BJ (cell line): ENCODE measurements at regions of chr6 and their contacts with region 1.

Region 1: GRCh38 chr6:128538763-128539162 is 18.4 kb upstream of the PTPRK start:
- DNase-seq: peak; percentile 37
- H3K4me3 ChIP-seq: no peak overlapping the region
- H3K27me3 ChIP-seq: no peaks in the 10 kb centered on the region
- CTCF ChIP-seq: no peak

Region 2: DNA sequence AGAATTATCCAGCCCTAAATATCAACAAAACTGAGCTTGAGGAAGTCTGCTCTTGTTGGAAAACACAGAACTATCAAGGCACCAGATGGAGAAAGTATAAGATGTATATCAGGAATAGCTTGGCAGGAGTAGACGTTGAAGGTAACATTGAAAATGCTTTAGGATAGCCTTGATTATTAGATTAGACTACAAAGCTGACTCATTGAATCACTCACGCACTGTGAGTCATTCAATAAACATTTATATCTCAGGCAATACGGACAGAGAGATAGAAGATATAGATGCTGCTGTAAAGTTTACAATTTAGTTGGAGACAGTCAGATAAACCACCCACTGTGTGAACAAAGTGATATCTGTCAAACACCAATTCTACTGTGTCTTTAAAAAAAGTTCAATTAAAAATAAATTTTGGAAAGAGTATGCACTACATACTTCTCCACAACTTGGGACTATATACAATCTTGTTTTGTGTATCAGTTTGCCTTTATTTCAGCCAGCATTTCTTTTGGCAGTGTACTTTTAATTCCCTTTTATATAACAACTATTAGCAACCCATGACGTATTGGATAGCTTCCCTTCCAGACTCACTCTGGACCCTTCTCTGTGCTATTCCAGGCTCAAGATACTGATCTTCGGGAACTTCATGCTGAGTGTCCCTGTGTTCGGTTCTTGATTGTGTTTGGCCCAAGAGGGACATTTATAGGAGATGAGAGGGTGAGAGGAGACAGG is 158.1 kb after region 1 on chr6:
- CTCF ChIA-PET with region 1: no interaction called
- POLR2A ChIA-PET with region 1: interaction called, 11 read pairs
- DNase-seq: peak; percentile 39
- H3K4me3 ChIP-seq: no peak overlapping the region
- H3K27me3 ChIP-seq: no peaks in the 10 kb centered on the region
- CTCF ChIP-seq: no peak